CD8-positive, alpha-beta T cell (primary cell): ENCODE measurements at regions of chr4 and their contacts with region 1.

Region 1: DNA sequence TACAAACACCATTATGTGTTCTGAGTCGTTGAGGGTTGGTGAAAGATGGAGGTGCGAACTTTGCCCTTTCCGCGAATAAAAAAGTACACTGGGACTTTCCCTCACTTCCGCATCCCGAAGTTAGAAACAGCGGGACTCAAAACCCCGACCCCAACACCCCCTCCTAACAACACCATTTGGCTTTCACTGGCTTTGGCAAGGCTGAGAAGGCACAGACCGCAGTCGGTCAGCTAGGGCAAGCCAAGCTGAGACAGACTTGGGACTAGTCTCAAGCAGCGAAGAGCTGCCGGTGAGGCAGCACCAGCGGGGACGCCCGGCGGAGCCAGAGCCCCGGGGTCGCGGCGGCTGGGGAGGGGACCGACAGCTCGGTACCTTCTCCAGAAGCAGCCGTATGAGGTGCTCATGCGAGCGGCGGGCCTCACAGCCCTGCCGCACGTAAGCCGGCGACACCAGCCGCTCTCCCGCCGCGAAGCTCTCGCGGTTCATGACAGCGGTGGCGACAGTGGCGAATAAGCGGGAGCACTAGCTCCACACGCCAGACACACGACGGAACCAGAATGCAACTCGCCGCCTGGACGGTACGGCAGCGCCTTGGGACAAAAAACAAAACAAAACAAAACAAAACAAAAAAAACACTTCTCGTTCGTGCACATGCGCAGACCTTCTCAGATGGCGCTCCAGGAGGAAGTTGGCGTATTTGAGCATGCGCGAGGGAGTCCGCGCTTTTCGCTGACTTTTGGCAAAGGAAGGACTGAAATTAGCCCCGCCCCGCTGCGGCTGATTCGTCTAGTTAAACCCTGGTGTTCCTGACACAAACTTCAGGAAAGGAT is at the start of gene SEPSECS:
- DNase-seq: peak; percentile 82 to 99 (median 94)
- ATAC-seq: peak; percentile 79
- H3K4me3 ChIP-seq: peak within 1 kb of the TSS; percentile 60 to 79
- H3K4me3 Mint-ChIP-seq: peak within 1 kb of the TSS; percentile 91
- H3K27ac ChIP-seq: peak within 1 kb of the TSS; percentile 97 to 98
- H3K27ac Mint-ChIP-seq: peak within 1 kb of the TSS; percentile 94
- H3K4me1 ChIP-seq: peaks cover 18% of the 10 kb centered on the region
- H3K4me1 Mint-ChIP-seq: peaks cover 52% of the 10 kb centered on the region
- H3K27me3 ChIP-seq: no peaks in the 10 kb centered on the region
- H3K27me3 Mint-ChIP-seq: no peaks in the 10 kb centered on the region
- CTCF ChIP-seq: no peak
- total RNA-seq, gene SEPSECS: 12.5 to 13.4 TPM

Region 2: GRCh38 chr4:24584175-24584850 is 575.8 kb before region 1 on chr4 and contains the start of gene DHX15:
- CTCF ChIA-PET with region 1: no interaction called
- POLR2A ChIA-PET with region 1: interaction called, 6 read pairs
- intact Hi-C with region 1: loop called (anchors 5 to 10 kb)
- DNase-seq: peak; percentile 81 to 98 (median 91)
- ATAC-seq: peak; percentile 94
- H3K4me3 ChIP-seq: peak within 1 kb of the TSS; percentile 81 to 97
- H3K4me3 Mint-ChIP-seq: peak within 1 kb of the TSS; percentile 98
- H3K27ac ChIP-seq: peak within 1 kb of the TSS; percentile 90 to 98
- H3K27ac Mint-ChIP-seq: peak within 1 kb of the TSS; percentile 98
- H3K4me1 ChIP-seq: peaks cover 18% of the 10 kb centered on the region
- H3K4me1 Mint-ChIP-seq: peaks cover 43% of the 10 kb centered on the region
- H3K27me3 ChIP-seq: no peaks in the 10 kb centered on the region
- H3K27me3 Mint-ChIP-seq: no peaks in the 10 kb centered on the region
- CTCF ChIP-seq: no peak
- total RNA-seq, gene DHX15: 211 to 221 TPM

Region 3: DNA sequence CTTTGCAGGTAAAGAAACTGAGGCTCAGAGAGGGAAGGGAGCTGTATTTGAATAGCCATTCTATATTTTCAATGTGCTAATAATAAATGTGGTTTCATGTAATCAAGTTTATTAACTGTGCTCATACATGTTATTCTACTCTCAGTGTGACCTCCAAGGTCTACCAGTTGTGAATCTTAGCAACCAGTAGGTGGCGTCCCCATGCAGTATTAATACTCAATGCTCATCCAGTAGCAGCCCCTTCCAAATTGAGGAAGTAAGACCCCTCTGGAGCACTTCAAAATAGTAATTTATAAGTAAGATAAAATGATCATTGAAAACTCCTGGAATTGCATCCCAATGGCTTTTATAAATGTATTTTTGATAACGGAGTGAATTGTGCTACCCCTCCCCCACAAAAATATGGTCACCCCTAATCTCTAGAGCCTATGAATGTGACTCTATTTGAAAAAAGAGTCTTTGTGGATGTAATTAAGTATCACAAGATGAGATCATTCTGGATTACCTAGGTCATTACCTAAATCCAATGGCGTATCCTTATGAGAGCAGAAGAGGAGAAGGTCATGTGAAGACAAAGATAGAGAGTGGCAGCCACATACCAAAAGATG is 20.5 kb after region 1 on chr4:
- CTCF ChIA-PET with region 1: interaction called, 6 read pairs
- POLR2A ChIA-PET with region 1: interaction called, 5 read pairs
- intact Hi-C with region 1: loop called in 1 of 2 experiments (anchors 1 kb)
- DNase-seq: peak in 5 of 9 experiments; percentile 27 to 69 (median 40)
- ATAC-seq: peak; percentile 80
- H3K4me3 ChIP-seq: no peak overlapping the region
- H3K4me3 Mint-ChIP-seq: no peak overlapping the region
- H3K27ac ChIP-seq: no peak overlapping the region
- H3K27ac Mint-ChIP-seq: no peak overlapping the region
- H3K4me1 ChIP-seq: peaks cover 16% of the 10 kb centered on the region
- H3K4me1 Mint-ChIP-seq: peaks cover 18% of the 10 kb centered on the region
- H3K27me3 ChIP-seq: no peaks in the 10 kb centered on the region
- H3K27me3 Mint-ChIP-seq: no peaks in the 10 kb centered on the region
- CTCF ChIP-seq: peak; percentile 89

Region 4: DNA sequence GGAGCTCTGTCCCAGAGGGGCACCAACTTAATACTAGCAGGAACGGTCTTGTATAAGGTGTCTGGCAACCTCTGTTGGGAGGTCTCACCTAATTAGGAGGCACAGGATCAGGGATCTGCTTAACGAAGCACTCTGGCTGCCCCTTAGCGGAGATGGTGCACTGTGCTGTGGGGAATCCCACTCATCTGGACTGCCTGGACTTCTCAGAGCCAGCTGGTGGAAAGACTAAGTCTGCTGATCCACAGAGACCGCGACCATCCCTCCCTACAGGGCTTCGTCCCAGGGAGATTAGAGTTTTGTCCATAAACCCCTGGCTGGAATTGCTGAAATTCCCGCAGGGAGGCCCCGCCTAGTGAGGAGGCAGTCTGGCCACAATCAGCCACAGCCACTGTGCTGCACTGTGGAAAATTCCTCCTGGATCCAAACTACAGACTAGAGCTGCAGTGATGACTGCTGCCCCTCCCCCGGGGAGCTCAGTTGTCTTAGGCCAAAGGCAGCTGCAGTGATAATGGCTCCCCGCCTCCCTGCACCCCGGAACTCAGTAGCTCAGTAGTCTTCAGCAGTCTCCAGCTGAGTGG is 130.5 kb after region 1 on chr4:
- CTCF ChIA-PET with region 1: no interaction called
- POLR2A ChIA-PET with region 1: no interaction called
- intact Hi-C with region 1: no loop called
- DNase-seq: no peak
- ATAC-seq: no peak
- H3K4me3 ChIP-seq: no peak overlapping the region
- H3K4me3 Mint-ChIP-seq: no peak overlapping the region
- H3K27ac ChIP-seq: no peak overlapping the region
- H3K27ac Mint-ChIP-seq: no peak overlapping the region
- H3K4me1 ChIP-seq: no peaks in the 10 kb centered on the region
- H3K4me1 Mint-ChIP-seq: no peaks in the 10 kb centered on the region
- H3K27me3 ChIP-seq: no peaks in the 10 kb centered on the region
- H3K27me3 Mint-ChIP-seq: peaks cover 3% of the 10 kb centered on the region
- CTCF ChIP-seq: no peak

Region 5: GRCh38 chr4:25862411-25863346 is 702.6 kb after region 1 on chr4 and contains the start of gene SEL1L3:
- CTCF ChIA-PET with region 1: no interaction called
- POLR2A ChIA-PET with region 1: interaction called, 3 read pairs
- intact Hi-C with region 1: loop called (anchors 2 to 5 kb)
- DNase-seq: peak in 8 of 9 experiments; percentile 34 to 71 (median 51)
- ATAC-seq: peak; percentile 37
- H3K4me3 ChIP-seq: peak within 1 kb of the TSS; percentile 71 to 72
- H3K4me3 Mint-ChIP-seq: peak within 1 kb of the TSS; percentile 100
- H3K27ac ChIP-seq: peak within 1 kb of the TSS; percentile 54 to 80
- H3K27ac Mint-ChIP-seq: peak within 1 kb of the TSS; percentile 91
- H3K4me1 ChIP-seq: peaks cover 40% of the 10 kb centered on the region
- H3K4me1 Mint-ChIP-seq: peaks cover 41% of the 10 kb centered on the region
- H3K27me3 ChIP-seq: no peaks in the 10 kb centered on the region
- H3K27me3 Mint-ChIP-seq: no peaks in the 10 kb centered on the region
- CTCF ChIP-seq: no peak
- total RNA-seq, gene SEL1L3: 31.2 to 33.7 TPM

Region 6: GRCh38 chr4:25913851-25914669 is 754.0 kb after region 1 on chr4 and contains the start of gene SMIM20:
- CTCF ChIA-PET with region 1: no interaction called
- POLR2A ChIA-PET with region 1: no interaction called
- intact Hi-C with region 1: loop called in 1 of 2 experiments (anchors 10 kb)
- DNase-seq: peak; percentile 81 to 95 (median 87)
- ATAC-seq: peak; percentile 94
- H3K4me3 ChIP-seq: peak within 1 kb of the TSS; percentile 72 to 78
- H3K4me3 Mint-ChIP-seq: peak within 1 kb of the TSS; percentile 97
- H3K27ac ChIP-seq: peak within 1 kb of the TSS; percentile 81 to 95
- H3K27ac Mint-ChIP-seq: peak within 1 kb of the TSS; percentile 98
- H3K4me1 ChIP-seq: peaks cover 18% of the 10 kb centered on the region
- H3K4me1 Mint-ChIP-seq: peaks cover 24% of the 10 kb centered on the region
- H3K27me3 ChIP-seq: no peaks in the 10 kb centered on the region
- H3K27me3 Mint-ChIP-seq: no peaks in the 10 kb centered on the region
- CTCF ChIP-seq: no peak
- total RNA-seq, gene SMIM20: 7.5 to 9.8 TPM